ENCODE measurements at regions of chr3 and their contacts with region 1.

Region 1: DNA sequence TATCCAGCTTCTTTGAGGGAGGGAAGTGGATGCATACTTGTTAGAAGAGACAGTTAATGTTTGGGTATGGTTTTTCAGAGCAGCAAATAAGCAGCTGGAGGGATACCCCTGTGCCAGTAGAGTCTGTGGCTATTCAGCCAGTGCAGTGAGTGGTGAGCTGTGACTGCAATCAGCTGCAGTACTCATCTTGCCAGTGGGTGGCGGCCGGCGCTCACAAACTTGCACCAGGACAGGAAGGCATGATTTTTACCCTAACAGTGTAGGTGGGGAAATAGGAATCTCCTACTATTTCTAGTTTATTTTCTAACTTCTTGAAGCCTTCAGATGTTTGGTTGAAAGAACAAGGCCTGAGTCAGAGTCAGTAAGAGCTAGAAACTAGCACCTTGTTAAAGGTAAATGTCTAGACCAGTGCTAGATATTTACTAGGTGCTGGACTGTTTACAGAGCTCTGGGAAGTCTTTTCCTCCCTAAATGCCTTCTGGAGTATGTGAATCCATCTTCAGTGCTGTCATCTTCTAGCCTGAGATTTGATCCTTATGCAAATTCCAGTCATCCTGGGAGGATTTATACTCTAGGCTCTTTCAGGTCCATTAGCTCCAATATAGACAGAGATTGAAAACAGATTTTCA is 23.6 kb downstream of the TIMP4 start:
- DNase-seq: peak; percentile 60
- CTCF ChIP-seq: peak; percentile 87

Region 2: GRCh38 chr3:12117473-12117872 is 17.7 kb before region 1 on chr3:
- CTCF ChIA-PET with region 1: interaction called, 11 read pairs
- POLR2A ChIA-PET with region 1: no interaction called
- DNase-seq: no peak
- CTCF ChIP-seq: no peak

Region 3: GRCh38 chr3:12150112-12150511 is 15.0 kb after region 1 on chr3:
- CTCF ChIA-PET with region 1: interaction called, 17 read pairs
- POLR2A ChIA-PET with region 1: no interaction called
- DNase-seq: no peak
- CTCF ChIP-seq: no peak

Region 4: DNA sequence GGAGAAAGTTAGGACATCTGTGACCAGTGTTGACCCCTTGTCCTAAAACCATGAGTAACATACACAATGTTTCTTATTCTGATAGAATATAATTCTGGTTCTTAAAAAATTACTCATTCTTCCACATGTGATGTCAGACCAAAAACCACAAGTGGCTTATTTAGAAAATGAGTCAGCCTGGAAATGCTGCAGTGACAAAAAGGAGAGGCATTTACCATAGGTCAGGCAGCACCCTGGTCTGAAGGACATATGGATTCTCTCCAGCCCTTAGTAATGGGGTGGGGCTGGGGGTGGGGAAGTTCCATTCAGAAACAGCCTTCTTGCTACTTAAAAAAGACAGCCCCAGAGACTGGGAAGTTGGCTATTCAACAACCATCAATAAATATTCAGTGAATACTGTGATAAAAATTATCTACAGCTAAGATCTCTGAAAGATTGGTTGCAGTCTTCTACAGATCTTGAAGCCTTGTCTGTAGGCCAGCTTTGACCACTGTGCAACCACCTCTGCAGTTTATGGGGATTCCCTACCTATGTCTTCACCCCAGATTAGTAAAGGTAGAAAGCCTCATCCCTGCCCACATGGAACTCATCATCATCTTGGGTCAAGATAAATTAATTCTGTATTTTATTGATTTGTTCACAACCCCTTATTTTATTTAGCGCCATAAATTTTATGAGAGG is 58.5 kb after region 1 on chr3:
- CTCF ChIA-PET with region 1: interaction called, 20 read pairs
- POLR2A ChIA-PET with region 1: no interaction called
- DNase-seq: peak; percentile 45
- CTCF ChIP-seq: no peak

Region 5: GRCh38 chr3:12484198-12484974 is 349.2 kb after region 1 on chr3 and contains the start of gene TSEN2:
- CTCF ChIA-PET with region 1: interaction called, 278 read pairs
- POLR2A ChIA-PET with region 1: no interaction called
- DNase-seq: peak; percentile 99
- CTCF ChIP-seq: peak; percentile 37